ENCODE measurements at regions of chr10 and their contacts with region 1.

Region 1: DNA sequence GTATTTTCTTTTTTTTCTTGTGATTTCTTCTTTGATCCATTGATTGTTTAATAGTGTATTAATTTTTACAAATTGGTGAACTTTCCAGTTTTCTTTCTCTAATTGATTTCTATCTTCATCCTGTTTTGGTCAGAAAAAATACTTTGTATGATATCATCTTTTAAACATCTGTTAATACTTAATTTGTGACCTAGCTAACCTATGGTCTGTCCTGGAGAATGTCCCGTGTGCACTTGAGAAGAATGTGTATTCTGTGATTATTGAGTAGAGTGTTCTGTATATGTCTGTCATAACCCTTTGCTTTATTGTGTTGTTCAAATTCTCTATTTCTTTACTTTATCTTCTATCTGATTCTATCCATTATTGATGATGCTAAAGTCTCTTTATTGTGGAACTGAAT is 65.8 kb upstream of the ZEB1 start:
- DNase-seq: no peak
- H3K4me3 ChIP-seq: no peak overlapping the region
- H3K27ac ChIP-seq: no peak overlapping the region
- H3K4me1 ChIP-seq: no peaks in the 10 kb centered on the region
- H3K27me3 ChIP-seq: peaks cover 2% of the 10 kb centered on the region
- CTCF ChIP-seq: no peak

Region 2: GRCh38 chr10:31146491-31147209 is 106.6 kb before region 1 on chr10:
- CTCF ChIA-PET with region 1: no interaction called
- dilution Hi-C with region 1: no loop called
- in situ Hi-C with region 1: no loop called
- intact Hi-C with region 1: no loop called
- DNase-seq: peak; percentile 72
- H3K4me3 ChIP-seq: no peak overlapping the region
- H3K27ac ChIP-seq: no peak overlapping the region
- H3K4me1 ChIP-seq: peaks cover 13% of the 10 kb centered on the region
- H3K27me3 ChIP-seq: no peaks in the 10 kb centered on the region
- CTCF ChIP-seq: no peak

Region 3: GRCh38 chr10:31304291-31304970 is 51.2 kb after region 1 on chr10:
- CTCF ChIA-PET with region 1: no interaction called
- dilution Hi-C with region 1: no loop called
- in situ Hi-C with region 1: no loop called
- intact Hi-C with region 1: loop called (anchors 5 kb)
- DNase-seq: no peak
- H3K4me3 ChIP-seq: no peak overlapping the region
- H3K27ac ChIP-seq: no peak overlapping the region
- H3K4me1 ChIP-seq: no peaks in the 10 kb centered on the region
- H3K27me3 ChIP-seq: no peaks in the 10 kb centered on the region
- CTCF ChIP-seq: no peak